ENCODE measurements at regions of chr17 and their contacts with region 1.

Region 1: GRCh38 chr17:72175787-72176186 is 55.0 kb downstream of the SOX9 start:
- DNase-seq: no peak
- ATAC-seq: no peak
- H3K4me3 ChIP-seq: no peak overlapping the region
- H3K4me3 Mint-ChIP-seq: no peak overlapping the region
- H3K27ac ChIP-seq: no peak overlapping the region
- H3K27ac Mint-ChIP-seq: no peak overlapping the region
- H3K4me1 ChIP-seq: no peaks in the 10 kb centered on the region
- H3K4me1 Mint-ChIP-seq: no peaks in the 10 kb centered on the region
- H3K27me3 ChIP-seq: no peaks in the 10 kb centered on the region
- H3K27me3 Mint-ChIP-seq: no peaks in the 10 kb centered on the region
- CTCF ChIP-seq: no peak

Region 2: DNA sequence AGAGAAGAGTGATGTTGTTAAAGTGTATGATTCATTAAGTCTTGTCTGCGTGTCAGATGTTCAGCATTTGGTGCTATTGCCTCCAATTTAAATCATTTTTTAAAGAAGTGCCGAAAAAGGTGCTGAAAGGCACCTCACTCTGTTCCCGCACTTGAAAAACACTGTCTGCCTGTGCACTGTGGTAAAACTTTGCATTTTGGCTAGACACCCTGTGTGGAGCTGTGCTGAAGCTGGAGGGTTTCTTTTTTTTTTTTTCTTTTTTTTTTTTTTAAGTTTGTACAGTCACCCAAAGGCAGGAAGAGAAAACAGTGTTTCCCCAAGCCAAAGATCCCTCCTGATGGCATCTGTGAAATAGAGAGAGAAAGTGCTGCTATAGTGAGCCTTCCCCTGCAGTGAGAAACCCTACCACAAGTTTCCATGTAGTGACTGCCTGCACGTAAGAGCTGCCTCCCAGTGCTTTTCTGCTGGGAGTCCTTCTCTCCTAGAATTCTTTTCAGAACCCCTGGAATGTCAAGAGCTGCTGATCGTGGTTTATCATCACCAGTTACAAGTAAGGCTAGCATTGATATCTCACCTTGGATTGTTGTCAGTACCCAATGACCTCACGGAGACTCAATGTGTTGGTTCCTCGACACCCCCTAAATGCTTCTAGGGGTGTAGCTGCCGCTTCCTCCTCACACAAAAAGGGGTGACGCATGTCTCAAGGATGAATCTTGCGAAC is 171.0 kb before region 1 on chr17:
- CTCF ChIA-PET with region 1: no interaction called
- POLR2A ChIA-PET with region 1: no interaction called
- intact Hi-C with region 1: loop called in 1 of 2 experiments (anchors 5 kb)
- DNase-seq: no peak
- ATAC-seq: no peak
- H3K4me3 ChIP-seq: no peak overlapping the region
- H3K4me3 Mint-ChIP-seq: no peak overlapping the region
- H3K27ac ChIP-seq: no peak overlapping the region
- H3K27ac Mint-ChIP-seq: no peak overlapping the region
- H3K4me1 ChIP-seq: no peaks in the 10 kb centered on the region
- H3K4me1 Mint-ChIP-seq: no peaks in the 10 kb centered on the region
- H3K27me3 ChIP-seq: no peaks in the 10 kb centered on the region
- H3K27me3 Mint-ChIP-seq: no peaks in the 10 kb centered on the region
- CTCF ChIP-seq: no peak

Region 3: DNA sequence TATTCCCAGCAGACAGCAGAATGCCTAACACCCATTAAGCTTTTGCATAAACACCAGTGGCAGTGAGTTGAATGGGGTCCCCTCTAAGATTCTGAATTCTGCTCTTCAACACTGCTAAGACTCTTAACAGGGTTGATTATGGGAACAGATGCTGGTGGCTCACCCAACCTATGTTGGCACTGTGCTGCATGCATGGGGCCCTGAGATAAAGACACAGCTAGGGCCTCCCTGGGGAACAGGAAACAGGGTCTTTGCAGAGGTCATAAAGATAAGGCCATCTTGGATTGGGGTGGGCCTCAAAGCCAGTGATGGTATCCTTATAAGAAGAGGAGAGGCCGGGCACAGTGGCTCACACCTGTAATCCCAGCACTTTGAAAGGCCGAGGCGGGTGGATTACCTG is 725.9 kb after region 1 on chr17:
- CTCF ChIA-PET with region 1: no interaction called
- POLR2A ChIA-PET with region 1: no interaction called
- intact Hi-C with region 1: no loop called
- DNase-seq: no peak
- ATAC-seq: no peak
- H3K4me3 ChIP-seq: no peak overlapping the region
- H3K4me3 Mint-ChIP-seq: no peak overlapping the region
- H3K27ac ChIP-seq: no peak overlapping the region
- H3K27ac Mint-ChIP-seq: no peak overlapping the region
- H3K4me1 ChIP-seq: no peaks in the 10 kb centered on the region
- H3K4me1 Mint-ChIP-seq: no peaks in the 10 kb centered on the region
- H3K27me3 ChIP-seq: no peaks in the 10 kb centered on the region
- H3K27me3 Mint-ChIP-seq: no peaks in the 10 kb centered on the region
- CTCF ChIP-seq: no peak

Measured in CD4-positive, alpha-beta T cell (primary cell).